K562 (cell line): ENCODE measurements at regions of chr16 and their contacts with region 1.

Region 1: GRCh38 chr16:71311553-71312158 is 22.5 kb upstream of the CMTR2 start:
- DNase-seq: peak; percentile 44 to 53 (median 48)
- ATAC-seq: peak; percentile 63; the same call in 2 of the 3 replicates
- H3K4me3 ChIP-seq: no peak overlapping the region
- H3K27ac ChIP-seq: no peak overlapping the region
- H3K4me1 ChIP-seq: no peaks in the 10 kb centered on the region
- H3K27me3 ChIP-seq: no peaks in the 10 kb centered on the region
- CTCF ChIP-seq: peak; percentile 75 to 86 (median 80)
- EP300 ChIP-seq: no peak
- POLR2A ChIP-seq: no peak
- RAD21 ChIP-seq: peak; percentile 81 to 90

Region 2: DNA sequence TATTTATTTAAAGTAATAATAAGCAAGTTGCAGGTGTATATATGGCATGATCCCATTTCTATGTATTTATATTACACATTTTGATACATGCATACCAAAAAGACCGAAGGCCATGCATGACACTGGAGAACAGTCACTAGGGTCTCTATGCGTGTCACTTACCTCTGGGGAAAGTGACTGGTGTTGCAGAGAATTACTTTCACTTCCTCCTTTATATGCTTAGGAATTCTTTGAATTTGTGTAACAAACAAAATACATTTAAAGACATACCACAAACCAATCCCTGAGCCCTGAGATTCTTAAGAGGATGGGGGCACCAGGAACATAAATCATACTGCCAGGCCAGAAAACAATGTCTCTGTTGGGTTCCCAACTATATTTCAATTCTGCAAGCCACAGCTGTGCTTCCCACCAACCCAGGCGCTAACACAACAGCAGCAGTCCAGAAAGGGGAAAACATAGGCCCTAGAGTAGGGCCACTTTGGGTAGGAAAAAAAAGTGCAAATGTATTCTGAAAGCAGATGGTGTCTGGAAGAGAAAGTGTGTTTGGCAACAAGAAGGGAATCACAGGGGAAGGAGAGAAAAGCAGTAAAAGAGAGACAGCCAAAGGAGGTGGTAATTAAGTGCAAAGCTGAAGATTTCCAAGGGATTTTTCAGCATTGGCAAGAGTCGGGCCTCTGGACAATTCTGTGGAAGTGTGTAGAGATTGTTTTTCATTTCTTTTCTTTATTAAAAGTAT is 56.7 kb before region 1 on chr16:
- CTCF ChIA-PET with region 1: no interaction called
- POLR2A ChIA-PET with region 1: no interaction called
- in situ Hi-C with region 1: no loop called
- intact Hi-C with region 1: loop called (anchors 5 kb)
- DNase-seq: no peak
- ATAC-seq: no peak
- H3K4me3 ChIP-seq: no peak overlapping the region
- H3K27ac ChIP-seq: no peak overlapping the region
- H3K4me1 ChIP-seq: no peaks in the 10 kb centered on the region
- H3K27me3 ChIP-seq: peaks cover 0 to 4% of the 10 kb centered on the region in 2 experiments; a peak in 1 of 5 replicates
- CTCF ChIP-seq: no peak
- EP300 ChIP-seq: no peak
- POLR2A ChIP-seq: no peak
- RAD21 ChIP-seq: no peak